Activated CD4-positive, alpha-beta T cell treated with anti-CD3 and anti-CD28 coated beads, Interleukin-2, amount 10 ng/mL, durations not matched to agents 24 days and 14 days (primary cell): ENCODE measurements at regions of chr11 and their contacts with region 1.

Region 1: DNA sequence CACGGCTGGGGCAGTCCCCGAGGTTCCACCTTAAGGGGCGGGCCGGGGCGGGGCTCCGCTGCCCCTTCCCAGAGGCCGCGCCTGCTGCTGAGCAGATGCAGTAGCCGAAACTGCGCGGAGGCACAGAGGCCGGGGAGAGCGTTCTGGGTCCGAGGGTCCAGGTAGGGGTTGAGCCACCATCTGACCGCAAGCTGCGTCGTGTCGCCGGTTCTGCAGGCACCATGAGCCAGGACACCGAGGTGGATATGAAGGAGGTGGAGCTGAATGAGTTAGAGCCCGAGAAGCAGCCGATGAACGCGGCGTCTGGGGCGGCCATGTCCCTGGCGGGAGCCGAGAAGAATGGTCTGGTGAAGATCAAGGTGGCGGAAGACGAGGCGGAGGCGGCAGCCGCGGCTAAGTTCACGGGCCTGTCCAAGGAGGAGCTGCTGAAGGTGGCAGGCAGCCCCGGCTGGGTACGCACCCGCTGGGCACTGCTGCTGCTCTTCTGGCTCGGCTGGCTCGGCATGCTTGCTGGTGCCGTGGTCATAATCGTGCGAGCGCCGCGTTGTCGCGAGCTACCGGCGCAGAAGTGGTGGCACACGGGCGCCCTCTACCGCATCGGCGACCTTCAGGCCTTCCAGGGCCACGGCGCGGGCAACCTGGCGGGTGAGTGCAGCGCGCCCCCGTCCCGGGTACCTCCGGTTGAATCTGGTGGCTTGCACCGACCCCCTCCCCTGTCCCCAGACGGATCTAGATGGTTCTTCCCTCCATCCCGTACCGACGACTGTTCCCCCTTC is at the start of gene SLC3A2:
- DNase-seq: peak; percentile 95
- H3K4me3 Mint-ChIP-seq: peak within 1 kb of the TSS; percentile 100
- H3K27ac Mint-ChIP-seq: peak within 1 kb of the TSS; percentile 100
- H3K4me1 Mint-ChIP-seq: peaks cover 53% of the 10 kb centered on the region
- H3K27me3 Mint-ChIP-seq: peaks cover 1% of the 10 kb centered on the region
- total RNA-seq, gene SLC3A2: 364 and 379 TPM in 2 replicates

Region 2: GRCh38 chr11:62427630-62428233 is 453.3 kb before region 1 on chr11:
- intact Hi-C with region 1: loop called (anchors 10 kb)
- DNase-seq: peak; percentile 74
- H3K4me3 Mint-ChIP-seq: peak overlapping the region; percentile 56
- H3K27ac Mint-ChIP-seq: peak overlapping the region; percentile 95
- H3K4me1 Mint-ChIP-seq: peaks cover 48% of the 10 kb centered on the region
- H3K27me3 Mint-ChIP-seq: peaks cover 5% of the 10 kb centered on the region

Region 3: DNA sequence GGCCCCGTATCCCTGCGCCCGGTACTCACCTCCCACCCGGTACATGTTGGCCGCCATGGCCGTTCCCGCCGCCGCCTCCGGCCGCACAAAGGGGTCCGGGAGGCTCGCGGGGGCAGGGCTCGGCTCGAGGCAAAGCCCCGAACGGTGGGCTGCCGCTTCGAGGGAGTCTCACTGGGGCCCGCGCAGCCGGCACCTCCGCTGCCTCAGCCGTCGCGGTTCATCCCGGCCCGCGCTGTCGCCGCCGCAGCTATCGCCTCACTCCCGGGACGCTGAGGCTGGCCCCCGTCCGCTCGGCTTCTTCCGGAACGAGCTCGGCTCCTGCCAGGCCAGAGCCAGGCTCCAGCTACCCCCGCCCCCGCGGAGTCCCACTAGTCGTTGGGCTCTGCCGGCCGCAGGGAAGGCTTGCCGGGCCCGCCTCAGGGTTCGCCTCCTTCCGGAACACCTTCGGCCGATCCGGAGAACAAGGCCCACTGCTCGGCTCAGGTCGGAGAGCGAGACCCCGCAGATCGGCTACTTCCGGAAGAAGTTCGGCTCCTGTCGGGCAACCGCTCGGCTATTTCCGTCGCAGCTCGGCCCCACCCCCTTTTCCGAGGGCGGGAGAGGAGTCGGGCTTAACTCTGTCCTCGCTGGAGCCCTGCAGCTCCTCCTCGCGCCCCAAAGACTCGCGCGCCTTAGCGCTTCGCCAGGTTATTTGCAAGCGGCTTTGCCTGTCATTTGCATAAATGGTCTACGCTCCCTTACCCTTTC is 279.4 kb before region 1 on chr11 and contains the start of gene MTA2:
- intact Hi-C with region 1: loop called (anchors 2 kb)
- DNase-seq: peak; percentile 100
- H3K4me3 Mint-ChIP-seq: peak within 1 kb of the TSS; percentile 95
- H3K27ac Mint-ChIP-seq: peak within 1 kb of the TSS; percentile 88
- H3K4me1 Mint-ChIP-seq: peaks cover 44% of the 10 kb centered on the region
- H3K27me3 Mint-ChIP-seq: no peaks in the 10 kb centered on the region
- total RNA-seq, gene MTA2: 219 and 220 TPM in 2 replicates

Region 4: DNA sequence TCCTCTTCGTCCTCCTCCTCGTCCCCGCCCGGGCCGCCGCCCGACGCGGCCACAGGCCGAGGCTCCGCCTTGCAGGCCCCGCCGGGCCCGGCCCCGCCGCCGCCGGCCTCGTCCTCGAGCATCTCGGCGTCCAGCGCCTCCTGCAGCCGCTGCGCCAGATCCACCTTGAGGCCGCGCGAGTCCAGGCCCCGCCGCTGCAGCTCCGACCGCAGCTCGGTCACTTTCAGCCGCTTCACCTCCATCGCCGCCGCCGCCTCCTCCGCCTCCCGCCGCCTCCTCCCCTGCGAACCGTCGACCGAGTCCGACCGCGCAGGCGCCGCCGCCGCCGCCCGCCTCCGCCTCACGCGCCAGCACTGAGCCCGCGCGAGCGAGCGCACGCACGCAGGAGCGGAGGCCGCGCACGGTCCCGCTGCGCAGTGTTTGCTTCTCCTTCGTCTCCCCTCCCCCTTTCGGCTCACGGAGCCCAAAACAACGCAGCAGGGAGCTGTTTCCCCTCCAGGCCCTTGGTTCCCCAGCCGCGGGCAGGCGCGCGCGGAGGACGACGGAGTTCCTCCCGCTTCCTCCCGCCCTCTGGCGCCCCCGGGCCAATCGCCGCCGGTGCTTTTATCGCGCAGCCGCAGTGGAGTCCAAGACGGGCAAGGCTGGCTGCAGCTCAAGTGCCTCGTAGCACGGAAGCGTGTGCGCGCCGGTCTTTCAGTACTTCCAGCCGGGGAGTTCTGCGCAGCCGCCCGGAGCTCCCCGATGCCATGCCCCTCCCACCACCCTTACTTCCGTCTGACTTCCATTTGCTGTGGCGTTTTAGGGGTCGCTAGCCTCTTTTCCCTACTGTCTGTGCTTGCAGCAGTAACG is 153.9 kb before region 1 on chr11 and contains the start of gene HNRNPUL2:
- intact Hi-C with region 1: loop called (anchors 2 kb)
- DNase-seq: peak; percentile 100
- H3K4me3 Mint-ChIP-seq: peak within 1 kb of the TSS; percentile 93
- H3K27ac Mint-ChIP-seq: peak within 1 kb of the TSS; percentile 99
- H3K4me1 Mint-ChIP-seq: peaks cover 38% of the 10 kb centered on the region
- H3K27me3 Mint-ChIP-seq: peaks cover 2% of the 10 kb centered on the region
- total RNA-seq, gene HNRNPUL2: 60.5 and 60.6 TPM in 2 replicates

Region 5: GRCh38 chr11:62805076-62805892 is 75.7 kb before region 1 on chr11 and contains the start of gene NXF1:
- intact Hi-C with region 1: loop called (anchors 1 kb)
- DNase-seq: peak; percentile 99
- H3K4me3 Mint-ChIP-seq: peak within 1 kb of the TSS; percentile 100
- H3K27ac Mint-ChIP-seq: peak within 1 kb of the TSS; percentile 95
- H3K4me1 Mint-ChIP-seq: peaks cover 30% of the 10 kb centered on the region
- H3K27me3 Mint-ChIP-seq: no peaks in the 10 kb centered on the region
- total RNA-seq, gene NXF1: 133 and 147 TPM in 2 replicates

Region 6: GRCh38 chr11:62855571-62856332 is 25.2 kb before region 1 on chr11:
- intact Hi-C with region 1: loop called (anchors 1 kb)
- DNase-seq: peak; percentile 100
- H3K4me3 Mint-ChIP-seq: peak overlapping the region; percentile 97
- H3K27ac Mint-ChIP-seq: peak overlapping the region; percentile 98
- H3K4me1 Mint-ChIP-seq: peaks cover 55% of the 10 kb centered on the region
- H3K27me3 Mint-ChIP-seq: peaks cover 7% of the 10 kb centered on the region

Region 7: DNA sequence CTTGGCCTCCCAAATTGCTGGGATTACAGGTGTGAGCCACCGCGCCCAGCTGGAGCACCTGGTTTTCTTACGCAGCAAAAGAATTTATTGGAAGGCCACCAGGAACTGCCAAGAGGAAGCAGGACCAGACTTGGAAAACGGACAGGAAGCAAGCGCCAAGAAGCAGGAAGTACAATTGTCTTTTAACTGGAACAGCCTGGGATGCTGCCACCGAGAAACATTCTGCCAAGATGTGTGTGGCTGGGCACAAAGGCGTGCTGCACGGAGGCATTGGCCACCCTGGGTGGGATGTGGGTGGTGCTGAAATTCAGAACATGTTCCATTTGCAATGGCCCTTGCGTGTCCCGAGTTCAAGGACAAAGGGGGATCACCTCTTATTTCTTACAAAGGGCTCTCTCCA is 15.1 kb after region 1 on chr11:
- intact Hi-C with region 1: no loop called
- DNase-seq: no peak
- H3K4me3 Mint-ChIP-seq: no peak overlapping the region
- H3K27ac Mint-ChIP-seq: no peak overlapping the region
- H3K4me1 Mint-ChIP-seq: peaks cover 3% of the 10 kb centered on the region
- H3K27me3 Mint-ChIP-seq: peaks cover 12% of the 10 kb centered on the region